Cardiac septum (tissue), 1 donor: ENCODE measurements at regions of chr3 and their contacts with region 1.

Region 1: DNA sequence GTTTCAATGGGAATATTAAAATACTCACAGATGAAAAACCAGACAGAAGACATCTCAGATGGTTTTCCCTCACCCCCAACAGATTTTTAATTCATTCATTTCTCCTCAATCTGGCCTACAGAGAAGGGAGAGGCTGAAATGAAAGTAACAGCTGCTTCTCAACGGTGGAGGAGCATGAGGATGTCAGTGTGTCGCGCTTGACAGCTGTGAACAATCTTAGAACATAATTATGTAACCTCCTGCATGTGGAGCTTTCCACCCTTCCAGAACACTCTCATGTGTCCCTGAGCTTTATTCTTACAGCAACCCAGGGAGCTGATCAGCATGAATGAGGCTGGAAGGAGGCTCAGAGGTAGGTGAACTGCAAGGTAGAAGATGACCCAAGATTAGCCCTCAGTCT is 52.7 kb downstream of the MB21D2 start:
- DNase-seq: no peak

Region 2: GRCh38 chr3:192831111-192831644 is 33.8 kb before region 1 on chr3:
- intact Hi-C with region 1: loop called (anchors 5 kb)
- DNase-seq: no peak